Activated CD8-positive, alpha-beta T cell treated with anti-CD3 and anti-CD28 coated beads for 36 hours (primary cell): ENCODE measurements at regions of chr14 and their contacts with region 1.

Region 1: GRCh38 chr14:20970983-20971704 is 15.9 kb downstream of the RNASE2 start:
- DNase-seq: peak; percentile 86
- ATAC-seq: peak; percentile 94
- H3K4me3 Mint-ChIP-seq: peak overlapping the region; percentile 79
- H3K27ac Mint-ChIP-seq: peak overlapping the region; percentile 48
- H3K4me1 Mint-ChIP-seq: peaks cover 6% of the 10 kb centered on the region
- H3K27me3 Mint-ChIP-seq: peaks cover 28% of the 10 kb centered on the region
- CTCF ChIP-seq: peak; percentile 95

Region 2: GRCh38 chr14:20697273-20698017 is 273.7 kb before region 1 on chr14:
- CTCF ChIA-PET with region 1: interaction called, 40 read pairs
- POLR2A ChIA-PET with region 1: no interaction called
- intact Hi-C with region 1: loop called (anchors 5 kb)
- DNase-seq: peak; percentile 78
- ATAC-seq: peak; percentile 93
- H3K4me3 Mint-ChIP-seq: no peak overlapping the region
- H3K27ac Mint-ChIP-seq: no peak overlapping the region
- H3K4me1 Mint-ChIP-seq: peaks cover under 1% of the 10 kb centered on the region
- H3K27me3 Mint-ChIP-seq: peaks cover 4% of the 10 kb centered on the region
- CTCF ChIP-seq: peak; percentile 75

Region 3: GRCh38 chr14:20866963-20867362 is 104.2 kb before region 1 on chr14:
- CTCF ChIA-PET with region 1: interaction called, 31 read pairs
- POLR2A ChIA-PET with region 1: no interaction called
- intact Hi-C with region 1: loop called (anchors 5 kb)
- DNase-seq: peak; percentile 5
- ATAC-seq: no peak
- H3K4me3 Mint-ChIP-seq: no peak overlapping the region
- H3K27ac Mint-ChIP-seq: no peak overlapping the region
- H3K4me1 Mint-ChIP-seq: no peaks in the 10 kb centered on the region
- H3K27me3 Mint-ChIP-seq: peaks cover 13% of the 10 kb centered on the region
- CTCF ChIP-seq: no peak

Region 4: DNA sequence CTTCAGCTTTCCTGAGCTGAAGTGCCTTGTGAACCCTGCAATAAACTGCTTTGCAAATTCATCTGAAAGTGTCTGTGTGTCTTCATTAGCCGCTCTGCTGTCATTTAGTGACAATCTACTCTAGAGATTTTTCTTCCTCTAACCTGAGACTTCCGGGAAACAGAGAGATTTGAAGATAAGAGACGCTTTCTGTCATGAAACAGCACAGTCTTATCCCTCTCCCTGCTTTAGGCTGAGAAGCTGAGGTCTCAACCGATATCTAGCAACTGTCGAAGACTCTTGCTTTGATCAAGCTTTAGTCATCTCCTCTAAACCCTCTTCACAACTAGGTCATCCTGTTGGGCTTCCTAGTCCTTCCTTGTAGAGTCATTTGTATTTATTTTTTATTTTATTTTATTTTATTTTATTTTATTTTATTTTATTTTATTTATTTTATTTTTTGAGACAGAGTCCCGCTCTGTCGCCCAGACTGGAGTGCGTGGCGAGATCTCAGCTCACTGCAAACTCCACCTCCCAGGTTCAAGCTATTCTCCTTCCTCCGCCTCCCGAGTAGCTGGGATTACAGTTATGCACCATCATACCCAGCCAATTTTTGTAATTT is 14.7 kb before region 1 on chr14:
- CTCF ChIA-PET with region 1: interaction called, 70 read pairs
- POLR2A ChIA-PET with region 1: interaction called, 7 read pairs
- intact Hi-C with region 1: no loop called
- DNase-seq: no peak
- ATAC-seq: peak; percentile 17
- H3K4me3 Mint-ChIP-seq: no peak overlapping the region
- H3K27ac Mint-ChIP-seq: no peak overlapping the region
- H3K4me1 Mint-ChIP-seq: peaks cover 15% of the 10 kb centered on the region
- H3K27me3 Mint-ChIP-seq: peaks cover 17% of the 10 kb centered on the region
- CTCF ChIP-seq: no peak

Region 5: DNA sequence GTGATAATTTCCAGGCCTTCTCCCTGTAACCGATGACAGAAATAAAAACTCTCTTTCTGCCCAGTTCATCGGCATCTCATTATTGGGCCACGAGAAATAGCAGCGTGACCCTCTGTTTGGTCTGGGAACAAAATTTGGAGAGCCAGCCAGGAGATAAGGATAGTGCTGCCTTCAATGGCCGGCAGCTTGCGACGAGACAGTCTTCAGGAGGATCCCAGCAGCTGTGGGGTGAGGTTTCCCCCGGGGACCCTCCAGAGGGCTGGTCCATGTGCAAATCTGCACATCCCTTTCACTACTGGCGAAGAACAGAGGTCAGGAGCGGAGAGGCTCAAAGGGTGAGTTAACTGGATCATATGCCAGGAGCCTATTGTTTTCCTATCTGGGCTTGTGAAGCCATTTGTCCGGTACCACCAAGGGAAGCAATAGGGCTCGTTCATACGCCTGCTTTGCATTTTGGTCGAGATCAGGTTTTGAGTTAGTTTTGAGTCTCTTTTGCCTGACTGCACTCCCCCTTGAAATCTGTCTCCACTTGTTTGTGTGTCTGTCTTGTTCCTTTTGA is 32.7 kb after region 1 on chr14:
- CTCF ChIA-PET with region 1: interaction called, 37 read pairs
- POLR2A ChIA-PET with region 1: interaction called, 3 read pairs
- intact Hi-C with region 1: no loop called
- DNase-seq: no peak
- ATAC-seq: no peak
- H3K4me3 Mint-ChIP-seq: no peak overlapping the region
- H3K27ac Mint-ChIP-seq: no peak overlapping the region
- H3K4me1 Mint-ChIP-seq: no peaks in the 10 kb centered on the region
- H3K27me3 Mint-ChIP-seq: no peaks in the 10 kb centered on the region
- CTCF ChIP-seq: no peak

Region 6: GRCh38 chr14:21103710-21104447 is 132.7 kb after region 1 on chr14:
- CTCF ChIA-PET with region 1: interaction called, 10 read pairs
- POLR2A ChIA-PET with region 1: no interaction called
- intact Hi-C with region 1: no loop called
- DNase-seq: peak; percentile 98
- ATAC-seq: peak; percentile 88
- H3K4me3 Mint-ChIP-seq: peak overlapping the region; percentile 80
- H3K27ac Mint-ChIP-seq: peak overlapping the region; percentile 90
- H3K4me1 Mint-ChIP-seq: peaks cover 36% of the 10 kb centered on the region
- H3K27me3 Mint-ChIP-seq: no peaks in the 10 kb centered on the region
- CTCF ChIP-seq: peak; percentile 64